Activated T-helper 1 cell treated with anti-CD3 and anti-CD28 coated beads, Interleukin-12 subunit alpha, Interleukin-12 subunit beta, Interleukin-2, Interleukin-4 antibody, amounts not matched to agents 30 ng/mL and 10 ng/mL and 1 ng/mL, durations not matched to agents 14 hours and 24 hours and 36 hours (primary cell): ENCODE measurements at regions of chr13 and their contacts with region 1.

Region 1: GRCh38 chr13:78022164-78022877 is 103.7 kb upstream of the EDNRB start:
- DNase-seq: peak; percentile 35
- H3K4me3 Mint-ChIP-seq: no peak overlapping the region
- H3K27ac Mint-ChIP-seq: peak overlapping the region; percentile 76
- H3K4me1 Mint-ChIP-seq: peaks cover 10% of the 10 kb centered on the region
- H3K27me3 Mint-ChIP-seq: peaks cover 14% of the 10 kb centered on the region

Region 2: DNA sequence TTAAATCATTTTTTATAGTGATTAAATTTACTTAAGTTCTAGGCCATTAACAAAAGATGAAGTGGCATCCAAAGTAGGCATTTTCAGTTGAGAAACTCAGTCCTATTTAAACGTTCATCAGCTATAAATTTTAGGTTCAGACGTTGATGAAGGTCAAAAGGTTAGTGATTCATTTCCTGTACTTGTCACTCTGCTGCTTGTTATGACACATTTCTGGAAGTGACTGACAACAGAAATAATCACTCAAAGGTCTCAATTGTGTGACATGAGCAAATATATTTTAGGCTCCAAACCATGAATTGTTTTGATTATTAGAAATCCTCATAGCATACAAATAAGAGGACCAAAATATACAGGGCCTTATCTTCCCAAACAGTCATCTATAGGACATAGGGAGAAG is 93.4 kb before region 1 on chr13:
- intact Hi-C with region 1: loop called (anchors 1 kb)
- DNase-seq: no peak
- H3K4me3 Mint-ChIP-seq: no peak overlapping the region
- H3K27ac Mint-ChIP-seq: no peak overlapping the region
- H3K4me1 Mint-ChIP-seq: peaks cover 18% of the 10 kb centered on the region
- H3K27me3 Mint-ChIP-seq: peaks cover 4% of the 10 kb centered on the region